ENCODE measurements at regions of chr4 and their contacts with region 1.

Region 1: GRCh38 chr4:9762823-9763475 is 18.5 kb upstream of the DRD5 start:
- DNase-seq: peak; percentile 68
- H3K4me3 ChIP-seq: no peak overlapping the region
- H3K27ac ChIP-seq: no peak overlapping the region
- H3K4me1 ChIP-seq: no peaks in the 10 kb centered on the region
- H3K27me3 ChIP-seq: no peaks in the 10 kb centered on the region
- CTCF ChIP-seq: peak; percentile 64 to 84

Region 2: GRCh38 chr4:9691238-9692065 is 71.5 kb before region 1 on chr4:
- CTCF ChIA-PET with region 1: no interaction called
- dilution Hi-C with region 1: no loop called
- in situ Hi-C with region 1: no loop called
- intact Hi-C with region 1: no loop called
- DNase-seq: peak; percentile 90
- H3K4me3 ChIP-seq: peak overlapping the region; percentile 58 to 77 (median 69)
- H3K27ac ChIP-seq: peak overlapping the region; percentile 15
- H3K4me1 ChIP-seq: peaks cover 5% of the 10 kb centered on the region
- H3K27me3 ChIP-seq: no peaks in the 10 kb centered on the region
- CTCF ChIP-seq: no peak

Region 3: GRCh38 chr4:9924750-9925149 is 161.8 kb after region 1 on chr4:
- CTCF ChIA-PET with region 1: no interaction called
- dilution Hi-C with region 1: no loop called
- in situ Hi-C with region 1: no loop called
- intact Hi-C with region 1: loop called (anchors 10 kb)
- DNase-seq: peak; percentile 91
- H3K4me3 ChIP-seq: no peak overlapping the region
- H3K27ac ChIP-seq: no peak overlapping the region
- H3K4me1 ChIP-seq: peaks cover 26% of the 10 kb centered on the region
- H3K27me3 ChIP-seq: no peaks in the 10 kb centered on the region
- CTCF ChIP-seq: no peak

Region 4: GRCh38 chr4:10018818-10019461 is 256.0 kb after region 1 on chr4:
- CTCF ChIA-PET with region 1: interaction called, 4 read pairs
- dilution Hi-C with region 1: no loop called
- in situ Hi-C with region 1: loop called (anchors 5 kb)
- intact Hi-C with region 1: loop called (anchors 1 kb)
- DNase-seq: peak; percentile 94
- H3K4me3 ChIP-seq: peak overlapping the region; percentile 49 to 88 (median 50)
- H3K27ac ChIP-seq: peak overlapping the region; percentile 72
- H3K4me1 ChIP-seq: peaks cover 41% of the 10 kb centered on the region
- H3K27me3 ChIP-seq: no peaks in the 10 kb centered on the region
- CTCF ChIP-seq: peak; percentile 88 to 98

Region 5: GRCh38 chr4:10096201-10096977 is 333.4 kb after region 1 on chr4:
- CTCF ChIA-PET with region 1: no interaction called
- dilution Hi-C with region 1: no loop called
- in situ Hi-C with region 1: no loop called
- intact Hi-C with region 1: no loop called
- DNase-seq: peak; percentile 97
- H3K4me3 ChIP-seq: no peak overlapping the region
- H3K27ac ChIP-seq: peak overlapping the region; percentile 86
- H3K4me1 ChIP-seq: peaks cover 84% of the 10 kb centered on the region
- H3K27me3 ChIP-seq: no peaks in the 10 kb centered on the region
- CTCF ChIP-seq: no peak

Region 6: GRCh38 chr4:10530137-10530786 is 767.3 kb after region 1 on chr4:
- CTCF ChIA-PET with region 1: no interaction called
- dilution Hi-C with region 1: no loop called
- in situ Hi-C with region 1: loop called in 1 of 2 experiments (anchors 25 kb)
- intact Hi-C with region 1: no loop called
- DNase-seq: peak; percentile 10
- H3K4me3 ChIP-seq: no peak overlapping the region
- H3K27ac ChIP-seq: no peak overlapping the region
- H3K4me1 ChIP-seq: peaks cover 34% of the 10 kb centered on the region
- H3K27me3 ChIP-seq: no peaks in the 10 kb centered on the region
- CTCF ChIP-seq: no peak